Activated naive CD4-positive, alpha-beta T cell treated with anti-CD3 and anti-CD28 coated beads for 36 hours (primary cell): ENCODE measurements at regions of chr1 and their contacts with region 1.

Region 1: DNA sequence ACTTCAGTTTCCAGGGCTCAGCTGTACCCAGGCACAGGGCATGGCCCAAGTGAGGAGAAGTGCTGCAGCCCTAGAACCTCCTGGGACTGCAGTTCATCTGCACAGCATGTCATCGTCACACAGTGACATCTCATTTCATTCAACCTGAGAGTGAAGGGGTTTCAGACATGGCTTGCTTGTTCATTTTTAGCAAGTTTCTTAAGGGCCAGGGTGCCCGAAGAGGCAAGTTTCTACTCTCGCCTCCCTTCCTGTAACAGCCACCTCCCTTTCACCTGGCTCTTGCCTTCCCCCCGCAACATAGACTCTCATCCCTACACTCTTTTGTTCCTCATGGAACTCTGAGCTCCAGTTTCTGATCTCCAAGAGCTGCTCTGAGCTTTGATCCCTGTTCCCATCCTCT is 108.1 kb downstream of the C1orf21 start:
- DNase-seq: no peak
- H3K4me3 Mint-ChIP-seq: no peak overlapping the region
- H3K27ac Mint-ChIP-seq: no peak overlapping the region
- H3K4me1 Mint-ChIP-seq: peaks cover 14% of the 10 kb centered on the region
- H3K27me3 Mint-ChIP-seq: no peaks in the 10 kb centered on the region

Region 2: DNA sequence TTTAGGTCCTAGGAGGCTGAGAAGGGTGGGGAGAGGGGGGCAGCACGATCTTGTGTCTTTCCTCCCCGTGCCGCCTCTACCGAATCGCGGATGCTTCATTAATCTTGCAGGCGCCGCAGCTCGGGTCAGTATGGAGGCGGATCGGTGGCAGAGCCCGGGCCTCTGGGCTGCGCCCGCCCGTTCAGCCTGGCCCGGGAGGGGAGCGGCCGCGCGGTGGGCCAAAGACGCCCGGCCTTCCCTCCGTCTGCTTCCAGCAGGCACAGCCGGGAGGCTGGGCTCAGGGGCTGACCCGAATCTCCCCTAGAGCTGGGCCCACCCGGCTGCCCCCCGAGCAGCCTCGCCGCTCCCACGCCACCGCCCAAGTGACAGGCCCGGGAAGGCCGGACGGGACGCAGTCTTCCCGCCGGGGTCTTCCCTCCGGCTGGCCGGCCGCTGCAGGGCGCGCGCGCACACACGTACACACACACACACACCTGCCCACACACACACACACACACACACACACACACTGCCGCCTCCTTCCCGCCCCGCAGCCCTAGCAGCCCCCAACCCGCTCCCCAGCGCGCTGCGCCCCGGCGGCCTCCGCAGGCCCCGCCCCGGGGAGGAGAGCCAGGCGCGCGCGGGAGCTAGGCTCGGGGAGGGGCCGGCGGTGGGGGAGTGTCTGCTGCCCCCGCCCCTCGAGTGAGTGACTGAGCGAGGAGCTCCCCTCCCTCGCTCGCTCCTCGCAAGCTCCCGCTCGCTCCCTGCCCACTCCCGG is 108.4 kb before region 1 on chr1 and contains the start of gene C1orf21:
- CTCF ChIA-PET with region 1: no interaction called
- intact Hi-C with region 1: loop called (anchors 1 kb)
- DNase-seq: peak; percentile 80
- H3K4me3 Mint-ChIP-seq: peak within 1 kb of the TSS; percentile 78
- H3K27ac Mint-ChIP-seq: no peak within 1 kb of the TSS
- H3K4me1 Mint-ChIP-seq: peaks cover 14% of the 10 kb centered on the region
- H3K27me3 Mint-ChIP-seq: peaks cover 59% of the 10 kb centered on the region
- total RNA-seq, gene C1orf21: 1.2 to 1.4 TPM

Region 3: DNA sequence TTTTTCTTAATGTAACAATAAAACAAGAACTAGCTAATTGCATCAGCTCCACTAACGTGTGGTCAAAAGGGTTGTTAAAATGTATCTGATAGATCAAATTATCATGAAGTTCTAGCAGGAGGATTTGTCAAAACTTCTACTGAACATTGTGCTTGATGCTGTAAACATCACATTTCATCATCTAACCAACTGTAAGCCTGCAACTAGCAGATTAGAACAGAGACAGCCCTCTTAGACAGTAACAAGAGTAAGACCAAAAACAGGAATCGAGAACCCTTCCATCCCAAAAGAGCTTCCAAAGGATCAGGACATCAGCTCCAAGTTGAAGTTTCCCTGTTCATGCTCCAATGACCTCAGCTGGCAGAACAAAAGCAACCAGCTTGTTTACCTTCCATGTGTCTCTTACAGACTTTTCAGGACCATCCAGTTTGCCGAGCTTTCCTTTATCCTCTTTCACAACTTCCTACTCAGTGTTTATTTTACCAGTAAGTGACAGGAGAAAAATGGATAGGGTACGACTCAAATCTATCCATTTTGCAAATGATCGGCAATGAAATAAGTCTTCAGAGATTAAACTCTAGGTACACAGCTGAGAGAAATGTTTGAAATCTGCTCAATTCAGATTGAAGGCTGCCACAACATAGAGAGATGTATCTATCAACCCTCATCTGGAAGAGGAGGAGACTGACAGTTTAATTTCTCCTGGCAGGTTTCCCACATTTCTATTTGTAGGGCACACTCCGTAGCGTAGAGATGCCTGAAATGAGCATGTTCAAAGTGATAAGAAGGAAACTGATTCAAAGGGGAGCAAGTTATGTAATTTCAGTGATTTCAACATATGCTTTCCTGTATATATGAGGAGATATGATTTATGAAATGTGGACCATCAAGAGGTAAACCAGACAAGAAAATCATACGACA is 435.0 kb after region 1 on chr1:
- CTCF ChIA-PET with region 1: no interaction called
- intact Hi-C with region 1: no loop called
- DNase-seq: no peak
- H3K4me3 Mint-ChIP-seq: no peak overlapping the region
- H3K27ac Mint-ChIP-seq: no peak overlapping the region
- H3K4me1 Mint-ChIP-seq: no peaks in the 10 kb centered on the region
- H3K27me3 Mint-ChIP-seq: peaks cover 4% of the 10 kb centered on the region